ENCODE measurements at regions of chr2 and their contacts with region 1.

Region 1: GRCh38 chr2:26605195-26605998 is 35.8 kb downstream of the CIB4 start:
- DNase-seq: peak; percentile 33
- ATAC-seq: peak; percentile 84
- H3K4me3 ChIP-seq: no peak overlapping the region
- H3K27ac ChIP-seq: no peak overlapping the region
- H3K4me1 ChIP-seq: peaks cover 6% of the 10 kb centered on the region
- H3K27me3 ChIP-seq: no peaks in the 10 kb centered on the region
- CTCF ChIP-seq: peak; percentile 83

Region 2: GRCh38 chr2:26495705-26496297 is 109.6 kb before region 1 on chr2:
- intact Hi-C with region 1: no loop called
- DNase-seq: no peak
- ATAC-seq: no peak
- H3K4me3 ChIP-seq: no peak overlapping the region
- H3K27ac ChIP-seq: no peak overlapping the region
- H3K4me1 ChIP-seq: peaks cover 9% of the 10 kb centered on the region
- H3K27me3 ChIP-seq: no peaks in the 10 kb centered on the region
- CTCF ChIP-seq: no peak

Region 3: DNA sequence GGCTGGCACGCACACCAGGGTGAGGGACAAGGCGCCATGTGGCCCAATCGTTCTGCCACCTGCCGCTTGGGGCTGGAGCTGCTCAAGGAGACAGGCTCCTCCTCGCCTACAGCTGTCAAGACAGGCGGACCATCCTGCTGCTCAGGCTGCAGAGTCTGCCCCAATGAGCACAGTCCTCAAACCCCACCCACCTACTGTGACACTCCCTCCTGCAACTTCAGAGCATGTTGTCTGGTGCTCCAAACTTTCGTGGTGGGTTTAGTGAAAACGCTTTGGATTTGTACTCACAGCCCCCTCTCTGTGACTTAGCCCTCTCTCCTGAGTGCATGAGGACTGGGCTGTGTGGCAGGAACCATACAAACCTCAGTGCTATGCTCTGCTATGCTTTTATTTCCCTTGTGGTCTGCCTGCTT is 135.5 kb after region 1 on chr2:
- intact Hi-C with region 1: loop called (anchors 5 kb)
- DNase-seq: no peak
- ATAC-seq: peak; percentile 55
- H3K4me3 ChIP-seq: no peak overlapping the region
- H3K27ac ChIP-seq: no peak overlapping the region
- H3K4me1 ChIP-seq: peaks cover 12% of the 10 kb centered on the region
- H3K27me3 ChIP-seq: no peaks in the 10 kb centered on the region
- CTCF ChIP-seq: peak; percentile 23